Posterior vena cava (tissue), 2 donors: ENCODE measurements at regions of chr4 and their contacts with region 1.

Region 1: DNA sequence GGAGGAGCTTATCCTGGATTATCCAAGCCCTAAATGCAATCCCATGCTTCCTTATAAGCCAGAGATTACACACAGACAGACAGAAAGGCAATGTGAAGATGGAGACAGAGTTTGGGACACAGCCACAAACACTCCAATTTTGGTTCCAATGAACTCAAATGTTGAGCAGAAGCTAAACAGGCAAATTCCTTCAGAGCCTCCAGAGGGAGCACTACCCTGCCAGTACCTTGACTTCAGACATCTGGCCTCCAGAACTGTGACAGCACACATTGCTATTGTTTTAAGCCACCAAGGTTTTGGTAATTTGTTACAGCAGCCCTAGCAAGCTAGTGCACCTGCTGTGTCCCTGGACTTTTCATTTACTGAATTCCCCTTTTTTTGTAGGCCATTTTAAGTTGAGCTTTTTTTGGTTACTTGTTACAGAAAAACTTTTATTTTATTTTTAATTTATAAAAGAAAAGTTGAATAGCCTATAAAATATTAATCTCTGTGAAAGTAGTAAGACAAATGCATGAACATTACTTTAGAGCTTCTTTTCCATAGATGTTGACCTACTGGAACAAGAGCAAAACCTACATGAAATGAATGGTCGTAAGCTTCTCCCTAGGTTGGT is 33.4 kb upstream of the SRD5A3 start:
- DNase-seq: no peak

Region 2: GRCh38 chr4:53929955-53930798 is 1382.4 kb before region 1 on chr4:
- intact Hi-C with region 1: no loop called
- DNase-seq: peak; percentile 85

Region 3: GRCh38 chr4:54971474-54971950 is 341.1 kb before region 1 on chr4:
- intact Hi-C with region 1: loop called in 1 of 2 experiments (anchors 10 kb)
- DNase-seq: no peak

Region 4: DNA sequence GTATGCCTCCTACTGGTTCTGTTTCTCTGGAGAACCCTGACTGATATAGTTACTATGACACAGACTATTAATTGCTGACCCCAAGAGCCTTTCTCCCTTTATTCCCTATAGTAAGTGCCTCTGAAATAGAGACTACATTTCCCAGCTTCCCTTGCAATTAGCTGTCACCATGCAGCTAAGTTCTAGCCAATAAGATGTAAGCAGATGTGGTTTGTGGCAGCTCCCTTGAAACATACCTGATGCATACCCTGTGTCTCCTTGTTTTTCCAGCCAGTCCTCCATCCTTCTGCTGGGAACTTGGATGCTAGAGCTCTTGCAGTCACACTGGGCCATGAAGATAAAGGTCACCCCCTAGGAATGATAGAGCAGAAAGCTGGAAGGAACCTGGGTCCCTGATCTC is 73.5 kb after region 1 on chr4:
- intact Hi-C with region 1: no loop called
- DNase-seq: no peak

Region 5: GRCh38 chr4:55920571-55920970 is 608.0 kb after region 1 on chr4:
- intact Hi-C with region 1: no loop called
- DNase-seq: no peak